ENCODE measurements at regions of chr17 and their contacts with region 1.

Region 1: DNA sequence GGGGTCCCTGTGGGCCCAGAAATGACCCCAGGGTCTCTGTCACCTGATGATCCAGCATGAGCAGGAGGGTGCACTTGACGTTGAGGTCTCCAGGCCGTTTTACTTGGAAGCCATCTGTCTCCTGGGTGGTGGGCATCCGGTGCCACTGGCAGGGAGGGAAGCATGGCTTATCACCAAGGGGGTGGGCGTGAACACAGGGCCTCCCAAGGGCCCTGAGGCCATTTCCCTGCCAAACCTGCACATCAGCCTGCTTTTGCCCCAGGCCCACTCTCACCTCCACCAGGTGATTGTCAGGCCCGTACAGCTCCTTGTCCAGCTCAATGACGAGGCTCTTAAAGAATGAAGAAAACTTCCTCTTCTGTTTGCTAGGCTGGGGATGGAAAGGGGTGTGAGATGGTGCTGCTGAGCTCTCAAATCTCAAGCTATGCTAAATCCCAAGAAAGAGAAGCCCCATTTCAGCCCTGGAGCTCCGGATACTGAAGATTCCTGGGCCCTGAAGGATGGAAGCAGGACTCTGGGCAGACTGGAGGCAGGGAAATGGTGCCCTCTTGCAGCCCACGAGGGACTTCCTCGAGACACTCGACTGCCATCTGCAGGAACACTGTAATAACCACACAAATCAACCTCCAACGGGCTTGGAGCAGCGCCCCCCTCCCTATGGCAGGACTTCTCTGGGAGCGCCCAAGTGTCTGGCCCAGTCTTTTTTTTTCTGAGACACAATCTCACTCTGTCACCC is 7.1 kb upstream of the FTSJ3 start:
- DNase-seq: peak; percentile 83
- ATAC-seq: peak; percentile 87
- H3K4me3 ChIP-seq: no peak overlapping the region
- H3K27ac ChIP-seq: peak overlapping the region; percentile 22
- H3K4me1 ChIP-seq: peaks cover 15 to 23% of the 10 kb centered on the region in 2 experiments
- H3K27me3 ChIP-seq: no peaks in the 10 kb centered on the region
- CTCF ChIP-seq: peak; percentile 94 to 99 (median 97)
- POLR2A ChIP-seq: no peak
- RAD21 ChIP-seq: no peak; the same call in 1 of the 2 replicates

Region 2: GRCh38 chr17:63658366-63658765 is 176.2 kb before region 1 on chr17:
- CTCF ChIA-PET with region 1: no interaction called
- POLR2A ChIA-PET with region 1: no interaction called
- RAD21 ChIA-PET with region 1: no interaction called
- intact Hi-C with region 1: no loop called
- DNase-seq: no peak
- ATAC-seq: no peak
- H3K4me3 ChIP-seq: no peak overlapping the region
- H3K27ac ChIP-seq: no peak overlapping the region
- H3K4me1 ChIP-seq: no peaks in the 10 kb centered on the region
- H3K27me3 ChIP-seq: no peaks in the 10 kb centered on the region
- CTCF ChIP-seq: no peak
- POLR2A ChIP-seq: no peak
- RAD21 ChIP-seq: no peak

Region 3: DNA sequence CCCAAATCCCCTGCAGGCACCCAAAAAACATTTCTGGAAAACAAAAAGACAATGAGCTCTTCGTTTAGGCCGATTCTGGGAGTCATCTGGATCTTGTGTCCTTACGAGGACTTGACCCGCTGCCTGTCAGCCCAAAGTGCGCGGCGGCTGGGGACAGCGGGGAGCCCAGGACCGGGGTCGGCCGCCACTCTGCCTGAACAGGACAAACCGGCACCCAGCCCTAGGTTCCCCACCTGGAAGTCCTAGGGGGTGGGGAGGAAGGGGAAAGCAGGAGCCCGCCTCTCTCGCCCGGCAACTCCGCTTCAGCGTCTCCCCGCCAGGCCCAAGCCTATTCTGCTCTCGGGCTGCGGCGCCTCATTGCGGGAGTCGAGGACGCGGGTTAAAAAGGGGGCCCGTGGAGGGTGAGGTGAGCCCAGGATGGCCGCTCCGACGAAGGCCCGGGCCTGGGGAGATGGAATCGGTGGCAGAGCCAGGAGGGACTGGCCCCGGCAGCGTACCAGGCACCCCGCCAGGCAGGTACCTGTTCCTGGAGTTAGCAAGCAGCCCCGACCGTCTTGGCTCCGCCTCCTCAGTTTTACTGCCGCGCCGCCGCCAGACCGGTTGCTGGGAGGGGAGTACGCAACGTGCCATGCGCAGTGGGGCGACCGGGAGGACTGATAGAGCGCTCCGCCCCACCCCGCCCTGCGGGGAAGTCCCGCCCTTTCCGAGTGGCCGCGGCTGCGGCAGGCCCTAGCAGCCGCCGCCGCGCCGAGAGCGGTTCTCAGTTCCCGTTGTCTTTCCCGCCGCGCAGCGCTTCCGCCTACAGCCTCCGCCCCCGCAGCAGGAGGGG is 93.2 kb before region 1 on chr17 and contains the start of gene STRADA:
- CTCF ChIA-PET with region 1: interaction called, 3 read pairs
- POLR2A ChIA-PET with region 1: interaction called, 3 read pairs
- RAD21 ChIA-PET with region 1: no interaction called
- intact Hi-C with region 1: loop called (anchors 2 kb)
- DNase-seq: peak; percentile 98
- ATAC-seq: peak; percentile 90
- H3K4me3 ChIP-seq: peak within 1 kb of the TSS; percentile 87 to 97
- H3K27ac ChIP-seq: peak within 1 kb of the TSS; percentile 89
- H3K4me1 ChIP-seq: peaks cover 6 to 23% of the 10 kb centered on the region in 2 experiments; a peak in 3 of 4 replicates
- H3K27me3 ChIP-seq: no peaks in the 10 kb centered on the region
- CTCF ChIP-seq: no peak
- POLR2A ChIP-seq: peak; percentile 73
- RAD21 ChIP-seq: no peak; the same call in 1 of the 2 replicates
- total RNA-seq, gene STRADA: 38.0 TPM

Measured in HCT116 (cell line).